Activated CD8-positive, alpha-beta T cell treated with anti-CD3 and anti-CD28 coated beads, Interleukin-2, amount 10 ng/mL, durations not matched to agents 7 days and 5 days (primary cell): ENCODE measurements at regions of chr10 and their contacts with region 1.

Region 1: DNA sequence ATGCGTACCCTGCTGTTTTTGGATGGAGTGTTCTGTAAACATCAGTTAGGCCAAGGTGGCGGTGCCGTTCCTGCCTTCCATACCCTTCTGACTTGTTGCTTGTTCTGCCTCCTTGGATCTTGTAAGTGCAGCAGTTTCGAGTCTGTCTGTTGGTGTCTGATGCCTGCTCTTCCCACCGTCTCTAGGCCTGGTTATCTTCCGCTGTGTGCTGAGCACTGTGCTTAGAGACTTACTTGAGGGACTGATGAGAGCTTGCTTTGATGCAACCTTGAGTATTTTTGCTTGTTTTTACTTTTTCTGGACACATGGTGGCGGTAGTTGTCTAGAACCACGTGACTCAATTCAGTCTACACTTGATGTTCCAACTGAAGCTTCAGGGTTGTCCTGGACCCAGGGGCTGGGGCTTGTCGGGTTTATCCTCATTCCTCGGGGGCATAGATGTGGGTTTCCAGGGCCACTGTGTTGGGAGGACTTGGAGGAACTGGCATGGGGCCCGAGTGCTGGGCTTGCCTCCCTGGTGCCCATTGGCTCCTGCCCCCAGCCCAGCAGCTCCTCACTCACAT is 14.4 kb upstream of the SPRN start:
- DNase-seq: peak; percentile 56
- ATAC-seq: peak; percentile 54
- H3K4me3 Mint-ChIP-seq: no peak overlapping the region
- H3K27ac Mint-ChIP-seq: no peak overlapping the region
- H3K4me1 Mint-ChIP-seq: peaks cover 25% of the 10 kb centered on the region
- H3K27me3 Mint-ChIP-seq: peaks cover 5% of the 10 kb centered on the region

Region 2: DNA sequence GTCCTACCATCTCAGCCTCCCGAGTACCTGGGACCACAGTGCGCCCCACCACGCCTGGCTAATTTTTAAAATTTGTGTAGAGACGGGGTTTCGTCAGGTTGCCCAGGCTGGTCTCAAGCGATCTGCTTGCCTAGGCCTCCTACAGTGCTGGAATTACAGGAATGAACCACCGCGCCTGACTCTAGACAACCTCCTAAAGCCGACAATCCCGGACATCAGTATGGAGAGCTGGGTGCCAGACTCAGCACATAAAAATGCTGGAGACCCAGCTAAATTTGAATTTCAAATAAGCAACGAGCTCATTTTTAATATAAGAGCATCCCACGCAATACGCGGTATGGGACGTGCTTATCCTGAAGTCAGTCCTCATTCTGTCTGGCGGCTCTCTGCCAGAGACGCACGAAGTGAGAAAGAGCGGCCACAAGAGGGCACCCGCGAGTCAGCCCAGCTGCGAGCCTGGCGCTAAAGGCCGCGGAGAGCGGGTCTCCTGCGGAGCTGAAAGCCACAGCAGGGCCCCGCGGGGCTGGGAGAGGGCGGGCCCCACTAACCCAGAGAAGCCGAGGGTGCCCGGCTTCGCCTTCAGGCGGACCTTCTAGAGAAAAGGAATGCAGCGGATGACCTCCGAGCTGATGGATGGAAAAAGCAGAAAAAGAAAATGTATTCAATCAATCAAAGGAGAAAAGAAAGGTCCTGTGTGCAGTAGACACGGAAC is 109.1 kb before region 1 on chr10:
- CTCF ChIA-PET with region 1: interaction called, 10 read pairs
- POLR2A ChIA-PET with region 1: no interaction called
- DNase-seq: peak; percentile 88
- ATAC-seq: peak; percentile 89
- H3K4me3 Mint-ChIP-seq: peak overlapping the region; percentile 36
- H3K27ac Mint-ChIP-seq: no peak overlapping the region
- H3K4me1 Mint-ChIP-seq: peaks cover 14% of the 10 kb centered on the region
- H3K27me3 Mint-ChIP-seq: peaks cover 61% of the 10 kb centered on the region

Region 3: DNA sequence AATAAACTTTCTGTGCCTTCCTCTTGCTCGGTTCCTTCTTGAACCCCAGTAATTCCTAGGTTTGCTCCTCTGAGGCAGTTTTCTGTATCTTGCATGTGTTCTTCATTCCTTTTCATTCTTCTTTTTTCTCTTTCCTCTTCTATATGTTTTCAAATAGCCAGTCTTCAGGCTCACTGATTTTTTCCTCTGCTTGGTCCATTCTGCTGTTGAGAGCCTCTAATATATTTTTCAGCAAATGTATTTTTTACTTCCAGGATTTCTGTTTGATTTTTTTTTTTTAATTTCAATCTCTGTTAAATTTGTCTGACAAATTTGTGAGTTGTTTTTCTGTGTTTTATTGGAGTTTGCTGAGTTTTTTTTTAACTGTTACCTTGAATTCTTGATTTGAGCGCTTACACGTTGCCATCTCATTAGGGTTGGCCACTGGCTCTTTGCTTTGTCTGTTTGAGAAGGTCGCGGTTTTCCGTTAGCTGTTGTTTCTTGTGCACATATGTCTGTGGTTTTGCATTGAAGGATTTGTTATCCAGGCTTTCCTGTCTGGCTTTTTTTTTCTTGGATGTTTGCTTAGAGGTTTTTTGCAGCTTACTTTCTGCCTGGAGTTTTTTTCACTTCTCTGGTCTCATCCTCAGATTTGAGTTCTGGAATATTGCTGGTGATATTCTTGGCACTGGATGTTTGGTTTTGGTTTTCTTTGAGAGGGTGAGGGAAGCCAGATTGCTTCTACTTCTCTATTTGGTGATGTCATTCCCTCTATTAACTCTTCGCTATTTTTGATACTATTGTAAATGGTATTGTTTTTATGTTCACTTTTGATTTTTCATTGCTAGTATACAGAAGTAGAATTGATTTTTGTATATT is 27.0 kb before region 1 on chr10:
- CTCF ChIA-PET with region 1: interaction called, 13 read pairs
- POLR2A ChIA-PET with region 1: no interaction called
- DNase-seq: no peak
- ATAC-seq: no peak
- H3K4me3 Mint-ChIP-seq: no peak overlapping the region
- H3K27ac Mint-ChIP-seq: no peak overlapping the region
- H3K4me1 Mint-ChIP-seq: peaks cover 4% of the 10 kb centered on the region
- H3K27me3 Mint-ChIP-seq: no peaks in the 10 kb centered on the region

Region 4: GRCh38 chr10:133465191-133465949 is 26.6 kb after region 1 on chr10:
- CTCF ChIA-PET with region 1: interaction called, 11 read pairs
- POLR2A ChIA-PET with region 1: no interaction called
- DNase-seq: peak; percentile 3
- ATAC-seq: no peak
- H3K4me3 Mint-ChIP-seq: no peak overlapping the region
- H3K27ac Mint-ChIP-seq: no peak overlapping the region
- H3K4me1 Mint-ChIP-seq: no peaks in the 10 kb centered on the region
- H3K27me3 Mint-ChIP-seq: no peaks in the 10 kb centered on the region

Region 5: DNA sequence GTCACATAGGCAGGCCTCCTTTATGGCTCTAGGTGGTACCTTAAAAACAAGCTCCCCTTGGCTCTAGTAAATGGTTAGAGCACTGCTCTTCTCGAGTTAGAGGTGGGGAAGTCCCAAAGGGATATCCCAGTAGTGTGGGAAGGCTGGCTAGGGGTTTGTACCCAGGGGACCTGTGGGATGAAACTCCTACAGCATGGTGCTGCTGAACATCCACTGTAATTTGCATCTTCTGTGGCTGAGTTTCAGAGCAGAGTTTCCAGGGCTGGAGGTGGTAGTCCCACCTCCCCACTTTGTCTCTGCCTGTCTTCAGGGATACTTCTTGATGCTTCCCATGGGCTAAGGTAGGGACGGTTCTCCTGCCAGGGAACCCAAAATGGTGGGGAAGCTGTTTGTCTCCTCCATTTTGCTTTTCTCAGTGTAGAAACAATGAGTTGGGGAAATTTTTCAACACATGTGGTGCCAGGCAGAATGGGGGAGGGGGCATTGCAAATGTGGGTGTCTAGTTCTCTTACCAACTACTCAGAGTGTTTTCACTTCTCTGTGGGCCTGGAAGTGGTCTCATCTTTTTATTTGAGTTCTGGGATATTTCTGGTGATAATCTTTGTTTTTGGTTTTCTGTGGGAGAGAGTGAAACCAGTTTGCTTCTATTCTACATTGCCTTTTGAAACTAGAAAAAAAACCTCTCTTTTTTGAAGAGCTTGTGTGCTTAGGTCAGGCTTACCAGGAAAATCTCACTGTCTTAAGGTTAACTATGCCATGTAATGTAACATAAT is 51.2 kb after region 1 on chr10:
- CTCF ChIA-PET with region 1: interaction called, 27 read pairs
- POLR2A ChIA-PET with region 1: no interaction called
- DNase-seq: no peak
- ATAC-seq: no peak
- H3K4me3 Mint-ChIP-seq: no peak overlapping the region
- H3K27ac Mint-ChIP-seq: peak overlapping the region; percentile 31
- H3K4me1 Mint-ChIP-seq: peaks cover 12% of the 10 kb centered on the region
- H3K27me3 Mint-ChIP-seq: peaks cover 7% of the 10 kb centered on the region

Region 6: DNA sequence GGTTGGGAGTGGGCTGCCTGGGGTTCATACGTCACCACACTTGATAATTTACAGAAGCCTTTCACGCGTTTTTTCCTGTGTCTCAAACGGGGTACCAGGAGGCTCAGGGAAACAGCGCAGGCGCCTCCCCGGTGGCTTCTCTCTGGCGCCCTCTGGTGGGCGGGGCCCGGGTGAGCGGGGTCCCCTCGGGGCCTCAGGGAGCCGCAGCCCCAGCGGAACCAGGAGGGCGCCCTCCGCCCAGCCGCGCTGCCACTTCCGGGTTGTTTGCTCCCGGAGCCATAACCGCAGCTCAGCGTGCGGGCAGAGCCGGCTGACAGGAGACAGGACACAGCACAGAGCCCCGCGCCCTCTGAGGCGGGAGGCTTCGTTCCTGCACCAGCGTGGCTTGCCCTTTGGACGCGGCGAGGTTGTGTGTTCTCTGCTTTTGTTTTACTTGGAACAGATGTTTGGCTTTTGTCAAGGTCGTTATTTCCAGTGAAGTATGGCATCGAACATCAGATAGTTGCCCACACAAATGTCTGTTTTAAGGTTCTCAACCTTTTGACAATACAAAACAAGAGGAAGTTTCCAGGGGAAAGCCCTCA is 81.5 kb after region 1 on chr10:
- CTCF ChIA-PET with region 1: interaction called, 29 read pairs
- POLR2A ChIA-PET with region 1: no interaction called
- DNase-seq: peak; percentile 92
- ATAC-seq: peak; percentile 100
- H3K4me3 Mint-ChIP-seq: peak overlapping the region; percentile 47
- H3K27ac Mint-ChIP-seq: no peak overlapping the region
- H3K4me1 Mint-ChIP-seq: peaks cover 11% of the 10 kb centered on the region
- H3K27me3 Mint-ChIP-seq: peaks cover 29% of the 10 kb centered on the region